ENCODE measurements at regions of chr1 and their contacts with region 1.

Region 1: DNA sequence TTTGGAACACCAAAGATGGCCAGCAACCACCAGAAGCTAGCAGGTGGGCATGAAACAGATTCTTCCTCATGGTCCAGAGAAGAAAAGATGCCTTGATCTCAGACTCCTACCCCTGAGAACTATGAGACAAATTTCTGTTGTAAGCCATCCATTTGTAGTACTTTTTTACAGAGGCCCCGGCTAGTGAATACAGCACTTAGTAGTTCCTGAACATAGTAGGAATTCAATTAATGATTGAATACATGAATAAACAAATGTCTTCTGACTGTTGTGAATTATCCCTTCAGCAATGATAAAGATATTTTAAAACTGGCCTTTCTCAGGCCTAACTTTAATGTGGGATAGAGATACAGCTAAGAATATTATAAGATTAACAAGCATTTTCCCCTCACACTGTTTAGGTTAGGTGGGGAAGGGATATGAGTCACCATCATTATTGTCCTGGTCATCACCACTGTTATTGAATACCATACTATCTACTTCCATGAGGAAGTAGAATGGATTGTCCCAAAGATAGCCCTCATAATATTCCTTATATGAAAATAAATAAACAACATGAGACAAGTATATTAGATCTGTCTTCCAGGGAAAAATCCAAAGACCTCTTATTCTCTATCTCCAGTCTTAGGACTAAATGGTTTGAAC is 51.4 kb downstream of the ADCY10 start:
- DNase-seq: peak in 1 of 4 experiments; percentile 45
- ATAC-seq: peak; percentile 10
- H3K4me3 ChIP-seq: no peak overlapping the region
- H3K27ac ChIP-seq: peak overlapping the region; percentile 64; the same call in 1 of the 3 replicates
- H3K4me1 ChIP-seq: peaks cover 21 to 44% of the 10 kb centered on the region in 2 experiments; a peak in 4 of 5 replicates
- H3K27me3 ChIP-seq: no peaks in the 10 kb centered on the region
- CTCF ChIP-seq: no peak
- EP300 ChIP-seq: no peak; the same call in 1 of the 2 replicates
- POLR2A ChIP-seq: no peak
- RAD21 ChIP-seq: no peak

Region 2: DNA sequence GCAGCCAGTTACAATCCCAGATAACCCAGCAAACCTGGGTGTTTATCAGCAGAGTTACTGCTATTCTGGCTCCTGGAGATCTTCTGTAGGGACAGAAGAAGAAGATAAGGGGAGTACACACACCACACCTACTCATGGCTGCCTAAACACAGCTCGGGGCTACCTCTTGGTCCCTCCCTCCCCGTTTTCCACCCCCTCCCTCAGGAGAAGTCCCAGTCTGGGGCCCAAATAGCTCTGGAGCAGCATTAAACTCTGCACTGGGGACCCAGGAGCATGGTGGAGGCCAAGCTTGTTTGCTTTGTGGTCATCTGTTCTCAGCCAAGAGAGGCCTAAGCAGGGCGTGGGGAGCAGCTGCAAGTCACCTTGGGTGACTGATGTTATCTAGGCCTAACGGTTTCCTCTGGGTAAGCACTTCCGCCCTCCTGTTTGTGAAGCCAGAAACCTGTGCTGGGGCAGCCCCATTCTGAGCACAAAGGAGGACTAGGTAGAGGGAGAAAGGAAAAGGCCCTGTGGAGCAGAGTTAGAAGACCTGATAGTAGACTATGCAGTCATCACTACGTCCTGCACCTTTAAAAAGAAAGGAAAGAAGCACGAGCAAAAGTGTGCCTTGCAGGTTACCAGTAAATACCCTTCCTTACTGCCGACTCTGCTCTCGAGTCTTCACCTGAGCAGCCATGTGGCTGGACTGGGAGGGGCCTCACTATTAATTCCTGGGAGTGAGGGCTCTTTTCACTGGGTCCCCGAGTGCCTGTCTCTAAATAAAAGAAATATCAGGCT is 234.5 kb before region 1 on chr1:
- CTCF ChIA-PET with region 1: no interaction called
- POLR2A ChIA-PET with region 1: no interaction called
- in situ Hi-C with region 1: no loop called
- intact Hi-C with region 1: loop called (anchors 10 kb)
- DNase-seq: peak; percentile 92 to 98 (median 92)
- ATAC-seq: peak; percentile 80
- H3K4me3 ChIP-seq: peak overlapping the region; percentile 77
- H3K27ac ChIP-seq: peak overlapping the region; percentile 97
- H3K4me1 ChIP-seq: peaks cover 36 to 55% of the 10 kb centered on the region in 2 experiments
- H3K27me3 ChIP-seq: no peaks in the 10 kb centered on the region
- CTCF ChIP-seq: no peak
- EP300 ChIP-seq: peak; percentile 98
- POLR2A ChIP-seq: peak; percentile 96
- RAD21 ChIP-seq: peak in 1 of 2 experiments; percentile 19; a peak in 2 of 4 replicates

Region 3: DNA sequence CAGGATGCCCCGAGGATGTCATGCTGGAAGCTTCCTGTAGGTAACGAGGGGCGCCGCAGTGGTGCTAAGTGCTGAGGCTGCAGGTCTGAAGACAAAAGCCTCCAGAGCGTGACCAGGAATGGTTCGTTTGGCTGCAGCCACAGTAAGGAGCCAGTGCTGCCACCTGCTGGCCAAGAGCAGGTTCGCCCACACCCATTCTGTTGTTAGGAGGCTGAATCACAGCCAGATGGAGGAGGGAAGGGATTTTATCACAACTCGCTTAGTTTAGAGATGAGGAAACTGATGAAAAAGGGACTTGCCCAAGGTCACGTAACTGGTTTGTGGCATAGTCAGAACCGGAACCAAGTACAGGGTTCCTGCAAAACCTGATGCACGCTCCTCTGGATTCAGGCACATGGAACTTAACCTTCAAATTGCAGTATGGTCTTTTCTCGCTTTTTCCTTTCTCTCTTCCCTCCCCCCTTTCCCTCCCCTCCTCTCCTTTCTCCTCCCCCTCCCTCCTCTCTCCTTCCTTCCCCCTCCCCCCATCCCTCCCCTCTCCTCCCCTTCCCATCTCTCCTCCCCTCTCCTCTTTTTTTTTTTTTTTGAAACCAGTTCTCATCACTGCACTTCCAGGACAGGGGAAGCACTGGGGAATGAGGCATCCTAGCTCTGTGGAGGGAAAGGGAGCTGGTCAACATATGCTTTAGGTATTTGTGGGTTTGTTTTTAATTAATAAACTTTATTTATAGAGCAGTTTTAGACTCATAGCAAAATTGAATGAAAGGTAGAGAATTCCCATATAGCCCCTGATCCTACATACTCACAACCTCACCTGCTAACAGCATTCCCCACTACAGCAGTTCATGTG is 59.0 kb before region 1 on chr1:
- CTCF ChIA-PET with region 1: no interaction called
- POLR2A ChIA-PET with region 1: interaction called, 3 read pairs
- in situ Hi-C with region 1: no loop called
- intact Hi-C with region 1: loop called (anchors 5 kb)
- DNase-seq: peak; percentile 92 to 96 (median 94)
- ATAC-seq: peak; percentile 98
- H3K4me3 ChIP-seq: no peak overlapping the region
- H3K27ac ChIP-seq: no peak overlapping the region
- H3K4me1 ChIP-seq: peaks cover 0 to 7% of the 10 kb centered on the region in 2 experiments; a peak in 4 of 5 replicates
- H3K27me3 ChIP-seq: no peaks in the 10 kb centered on the region
- CTCF ChIP-seq: peak; percentile 98 to 100 (median 98)
- EP300 ChIP-seq: peak; percentile 8; the same call in 1 of the 2 replicates
- POLR2A ChIP-seq: no peak
- RAD21 ChIP-seq: peak; percentile 91 to 95

Region 4: GRCh38 chr1:167927046-167927754 is 64.6 kb after region 1 on chr1:
- CTCF ChIA-PET with region 1: no interaction called
- POLR2A ChIA-PET with region 1: interaction called, 3 read pairs
- in situ Hi-C with region 1: no loop called
- intact Hi-C with region 1: loop called (anchors 2 kb)
- DNase-seq: no peak
- ATAC-seq: peak; percentile 5
- H3K4me3 ChIP-seq: peak overlapping the region; percentile 1; the same call in 1 of the 2 replicates
- H3K27ac ChIP-seq: peak overlapping the region; percentile 69
- H3K4me1 ChIP-seq: peaks cover 28 to 47% of the 10 kb centered on the region in 2 experiments
- H3K27me3 ChIP-seq: no peaks in the 10 kb centered on the region
- CTCF ChIP-seq: no peak
- EP300 ChIP-seq: no peak
- POLR2A ChIP-seq: no peak
- RAD21 ChIP-seq: no peak

Region 5: GRCh38 chr1:168243636-168244212 is 381.2 kb after region 1 on chr1:
- CTCF ChIA-PET with region 1: no interaction called
- POLR2A ChIA-PET with region 1: no interaction called
- in situ Hi-C with region 1: no loop called
- intact Hi-C with region 1: no loop called
- DNase-seq: no peak
- ATAC-seq: peak; percentile 68
- H3K4me3 ChIP-seq: no peak overlapping the region
- H3K27ac ChIP-seq: no peak overlapping the region; the same call in 2 of the 3 replicates
- H3K4me1 ChIP-seq: peaks cover 0 to 5% of the 10 kb centered on the region in 2 experiments; a peak in 1 of 5 replicates
- H3K27me3 ChIP-seq: no peaks in the 10 kb centered on the region
- CTCF ChIP-seq: no peak
- EP300 ChIP-seq: peak; percentile 33; the same call in 1 of the 2 replicates
- POLR2A ChIP-seq: no peak
- RAD21 ChIP-seq: no peak